ENCODE measurements at regions of chr7 and their contacts with region 1.

Region 1: GRCh38 chr7:133339772-133340171 is 86.9 kb downstream of the EXOC4 start:
- DNase-seq: no peak
- H3K4me3 ChIP-seq: no peak overlapping the region
- H3K27ac ChIP-seq: no peak overlapping the region
- H3K27me3 ChIP-seq: no peaks in the 10 kb centered on the region
- CTCF ChIP-seq: no peak

Region 2: DNA sequence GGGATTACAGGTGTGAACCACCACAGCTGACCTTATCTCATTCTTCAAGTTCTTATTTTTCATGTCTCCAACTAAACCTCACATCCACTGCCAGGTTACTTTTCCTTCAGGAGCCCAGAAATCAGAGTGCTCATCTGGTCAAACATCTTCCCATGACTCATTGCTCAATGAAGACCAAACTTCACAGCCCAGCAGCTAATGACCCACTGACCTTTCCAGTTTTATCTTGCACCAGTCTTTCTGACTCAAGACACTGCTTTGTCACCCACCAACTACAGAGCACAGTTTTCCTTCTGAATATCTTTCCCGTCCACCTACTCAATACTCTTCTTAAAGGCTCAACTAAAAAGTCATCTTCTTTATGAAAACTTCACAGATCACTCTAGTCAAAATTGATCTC is 503.0 kb before region 1 on chr7:
- CTCF ChIA-PET with region 1: interaction called, 10 read pairs
- POLR2A ChIA-PET with region 1: no interaction called
- DNase-seq: no peak
- H3K4me3 ChIP-seq: no peak overlapping the region
- H3K27ac ChIP-seq: no peak overlapping the region
- H3K27me3 ChIP-seq: no peaks in the 10 kb centered on the region
- CTCF ChIP-seq: no peak

Measured in AG04450 (cell line).